Heart right ventricle (tissue), 16 donors: ENCODE measurements at regions of chr18 and their contacts with region 1.

Region 1: GRCh38 chr18:48445540-48445939 is 36.4 kb upstream of the ZBTB7C start:
- DNase-seq: peak; percentile 56 to 73
- ATAC-seq: peak in 7 of 8 donors; percentile 58 to 78 (median 71)
- H3K4me3 ChIP-seq: no peak overlapping the region
- H3K27ac ChIP-seq: no peak overlapping the region
- H3K4me1 ChIP-seq: peaks cover 0 to 41% (median 25%) of the 10 kb centered on the region in 9 donors
- H3K27me3 ChIP-seq: peaks cover 0 to 29% (median 0%) of the 10 kb centered on the region in 7 donors
- CTCF ChIP-seq: peak; percentile 72 to 90 (median 84)

Region 2: GRCh38 chr18:48022531-48023329 is 422.8 kb before region 1 on chr18:
- intact Hi-C with region 1: loop called in 2 of 10 experiments (anchors 2 to 5 kb)
- DNase-seq: peak in 1 of 2 donors; percentile 41
- ATAC-seq: peak; percentile 47 to 78 (median 72)
- H3K4me3 ChIP-seq: no peak overlapping the region
- H3K27ac ChIP-seq: no peak overlapping the region
- H3K4me1 ChIP-seq: peaks cover 5 to 26% (median 15%) of the 10 kb centered on the region in 9 donors
- H3K27me3 ChIP-seq: peaks cover 0 to 23% (median 6%) of the 10 kb centered on the region in 7 donors
- CTCF ChIP-seq: peak; percentile 28 to 70 (median 63)

Region 3: DNA sequence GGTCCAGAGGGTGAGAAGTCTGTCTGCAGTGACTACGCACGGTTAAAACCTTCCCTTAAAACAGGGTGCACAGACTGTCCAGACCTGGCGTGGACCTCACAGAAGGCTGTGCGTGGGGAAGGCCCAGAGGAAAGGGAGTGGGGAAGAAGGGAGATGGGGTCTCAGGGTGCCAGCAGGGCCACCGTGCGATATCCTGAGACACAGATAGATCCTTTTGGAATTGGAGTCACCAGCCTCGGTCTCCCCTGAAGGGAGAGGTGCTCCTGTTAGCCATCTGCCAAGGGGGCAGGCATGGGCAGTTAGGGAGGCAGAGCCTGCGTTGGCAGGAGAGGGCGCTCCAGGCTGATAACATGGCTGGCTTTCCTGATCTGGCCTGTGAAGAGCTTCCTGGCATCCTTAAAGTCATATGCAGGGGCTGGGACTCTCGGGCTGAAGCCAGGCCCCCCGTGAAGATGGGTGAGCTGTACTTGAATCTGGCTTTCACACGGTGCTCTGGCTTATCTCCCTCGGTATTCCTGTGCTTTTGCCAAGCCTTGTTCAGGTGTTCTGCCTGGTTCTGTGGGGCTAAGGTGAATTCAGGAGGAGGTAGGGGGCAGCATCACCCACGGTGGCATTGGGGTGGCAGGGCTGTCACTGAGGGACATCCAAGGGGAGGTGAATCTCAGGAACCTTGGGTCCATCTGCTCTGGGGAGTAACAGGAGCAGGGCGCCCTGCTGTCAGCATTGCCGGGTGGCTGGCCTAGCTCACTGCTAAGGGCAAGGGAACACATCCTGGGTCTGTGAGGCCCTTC is 407.9 kb before region 1 on chr18:
- intact Hi-C with region 1: loop called in 2 of 10 experiments (anchors 5 kb)
- DNase-seq: peak; percentile 37 to 41
- ATAC-seq: peak; percentile 31 to 86 (median 74)
- H3K4me3 ChIP-seq: no peak overlapping the region
- H3K27ac ChIP-seq: no peak overlapping the region
- H3K4me1 ChIP-seq: peaks cover 0 to 29% (median 2%) of the 10 kb centered on the region in 9 donors
- H3K27me3 ChIP-seq: no peaks in the 10 kb centered on the region
- CTCF ChIP-seq: peak in 8 of 9 donors; percentile 40 to 68 (median 56)

Region 4: GRCh38 chr18:48222118-48222517 is 223.4 kb before region 1 on chr18:
- intact Hi-C with region 1: loop called in 1 of 10 experiments (anchors 10 kb)
- DNase-seq: peak in 1 of 2 donors; percentile 69
- ATAC-seq: peak in 7 of 8 donors; percentile 61 to 90 (median 73)
- H3K4me3 ChIP-seq: no peak overlapping the region
- H3K27ac ChIP-seq: no peak overlapping the region
- H3K4me1 ChIP-seq: peaks cover 2 to 23% (median 9%) of the 10 kb centered on the region in 9 donors
- H3K27me3 ChIP-seq: no peaks in the 10 kb centered on the region
- CTCF ChIP-seq: no peak

Region 5: GRCh38 chr18:48330403-48331022 is 115.0 kb before region 1 on chr18:
- intact Hi-C with region 1: loop called in 1 of 10 experiments (anchors 10 kb)
- DNase-seq: no peak
- ATAC-seq: no peak
- H3K4me3 ChIP-seq: no peak overlapping the region
- H3K27ac ChIP-seq: no peak overlapping the region
- H3K4me1 ChIP-seq: peaks cover 0 to 11% (median 0%) of the 10 kb centered on the region in 9 donors
- H3K27me3 ChIP-seq: no peaks in the 10 kb centered on the region
- CTCF ChIP-seq: no peak

Region 6: DNA sequence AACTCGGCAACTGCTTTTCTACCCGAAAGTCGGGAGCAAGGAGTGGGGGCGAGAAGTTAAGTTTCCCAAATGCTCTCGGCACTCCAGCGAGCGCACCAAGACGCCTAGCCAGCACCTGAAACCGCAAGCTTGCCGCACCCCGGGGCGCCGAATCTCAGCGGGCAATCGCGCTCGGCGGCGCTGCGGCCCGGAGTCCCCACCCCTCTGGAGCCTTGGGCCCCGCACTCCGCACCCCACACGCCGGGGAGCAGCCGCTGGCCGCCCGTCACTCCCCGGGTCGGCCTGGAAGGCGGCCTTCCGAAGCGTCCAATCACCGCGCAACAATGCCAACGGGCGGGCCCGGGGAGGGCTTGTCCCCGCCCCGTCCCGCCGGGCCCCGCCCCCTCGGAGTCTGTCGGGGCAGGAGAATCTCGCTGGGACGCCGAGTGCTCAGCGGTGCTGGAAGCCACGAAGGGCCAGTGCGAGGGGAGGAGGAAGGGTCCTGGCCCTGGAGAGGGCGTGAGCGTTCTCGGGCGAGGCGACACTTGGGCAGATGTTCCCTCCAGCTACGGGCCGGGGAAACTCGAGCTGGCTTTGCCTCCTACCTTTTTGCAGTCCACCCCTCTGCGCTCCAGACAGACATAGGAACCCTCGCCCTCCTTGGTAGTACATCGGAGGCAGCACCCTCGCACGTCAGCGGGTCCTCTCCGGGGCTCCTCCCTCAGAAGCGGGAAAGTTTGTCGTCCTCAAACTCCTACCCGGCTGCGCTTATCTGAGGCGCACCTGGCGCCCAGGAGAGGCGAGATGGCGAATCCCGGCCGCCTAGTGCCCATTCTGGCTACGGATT is 35.2 kb before region 1 on chr18:
- intact Hi-C with region 1: loop called in 1 of 10 experiments (anchors 5 kb)
- DNase-seq: peak; percentile 92 to 94
- ATAC-seq: peak; percentile 98 to 99 (median 99)
- H3K4me3 ChIP-seq: peak overlapping the region; percentile 56 to 92 (median 76)
- H3K27ac ChIP-seq: peak overlapping the region; percentile 2 to 83 (median 70)
- H3K4me1 ChIP-seq: peaks cover 5 to 27% (median 14%) of the 10 kb centered on the region in 9 donors
- H3K27me3 ChIP-seq: peaks cover 0 to 71% (median 44%) of the 10 kb centered on the region in 7 donors
- CTCF ChIP-seq: peak in 1 of 9 donors; percentile 3